Cardiac septum (tissue), 1 donor: ENCODE measurements at regions of chr6 and their contacts with region 1.

Region 1: GRCh38 chr6:83505356-83505755 is 7.0 kb upstream of the PRSS35 start:
- DNase-seq: no peak

Region 2: DNA sequence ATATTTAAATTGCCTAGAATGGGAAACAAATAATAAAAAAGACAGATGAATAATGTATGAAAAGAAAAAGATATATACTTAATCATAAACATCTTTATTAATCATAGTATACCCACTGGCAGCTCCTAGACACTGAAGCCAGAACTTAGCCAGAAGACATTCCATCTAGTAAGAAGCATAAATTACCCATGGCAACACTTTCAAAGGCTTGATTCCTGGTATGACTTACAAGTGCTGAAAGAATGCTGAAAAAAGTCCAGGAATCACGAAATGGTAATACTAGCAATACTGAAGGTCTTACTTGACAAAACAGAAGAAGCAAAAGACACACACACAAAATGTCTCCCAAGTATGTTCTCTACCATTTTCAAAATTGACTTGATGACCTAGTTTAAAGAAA is 274.2 kb before region 1 on chr6:
- intact Hi-C with region 1: loop called (anchors 5 kb)
- DNase-seq: no peak

Region 3: DNA sequence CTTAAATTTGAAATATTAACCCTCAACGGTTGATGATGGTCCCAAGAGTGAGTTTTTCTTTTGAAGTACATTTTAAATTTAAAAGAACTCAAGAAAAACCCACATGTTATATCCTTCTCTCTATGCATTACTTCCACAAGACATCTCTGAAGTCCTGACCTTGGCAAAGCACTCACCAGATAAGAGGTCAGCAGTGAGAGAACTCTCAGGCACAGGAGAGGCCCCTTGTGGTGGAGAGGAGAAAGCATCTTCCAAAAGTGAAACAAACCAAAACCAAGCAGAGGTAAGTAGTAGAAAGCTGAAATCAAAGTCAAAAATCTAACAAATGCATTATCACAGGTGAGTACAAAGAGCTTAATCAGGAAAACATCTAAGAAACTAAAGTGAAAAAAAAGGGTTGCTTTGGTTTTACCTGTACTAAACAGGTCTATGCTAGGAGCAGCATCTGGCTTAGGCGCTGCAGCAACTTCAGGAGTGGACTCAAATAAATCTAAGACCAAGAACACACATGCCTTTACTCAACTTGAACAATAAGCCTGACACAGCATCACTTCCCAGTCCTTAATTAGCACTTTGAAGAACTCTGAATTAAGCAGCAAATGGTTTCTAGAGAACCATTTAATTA is 87.5 kb after region 1 on chr6:
- intact Hi-C with region 1: no loop called
- DNase-seq: no peak